Activated T-helper 1 cell treated with anti-CD3 and anti-CD28 coated beads, Interleukin-12 subunit alpha, Interleukin-12 subunit beta, Interleukin-2, Interleukin-4 antibody, amounts not matched to agents 30 ng/mL and 10 ng/mL and 1 ng/mL, durations not matched to agents 14 hours and 24 hours and 36 hours (primary cell): ENCODE measurements at regions of chr1 and their contacts with region 1.

Region 1: DNA sequence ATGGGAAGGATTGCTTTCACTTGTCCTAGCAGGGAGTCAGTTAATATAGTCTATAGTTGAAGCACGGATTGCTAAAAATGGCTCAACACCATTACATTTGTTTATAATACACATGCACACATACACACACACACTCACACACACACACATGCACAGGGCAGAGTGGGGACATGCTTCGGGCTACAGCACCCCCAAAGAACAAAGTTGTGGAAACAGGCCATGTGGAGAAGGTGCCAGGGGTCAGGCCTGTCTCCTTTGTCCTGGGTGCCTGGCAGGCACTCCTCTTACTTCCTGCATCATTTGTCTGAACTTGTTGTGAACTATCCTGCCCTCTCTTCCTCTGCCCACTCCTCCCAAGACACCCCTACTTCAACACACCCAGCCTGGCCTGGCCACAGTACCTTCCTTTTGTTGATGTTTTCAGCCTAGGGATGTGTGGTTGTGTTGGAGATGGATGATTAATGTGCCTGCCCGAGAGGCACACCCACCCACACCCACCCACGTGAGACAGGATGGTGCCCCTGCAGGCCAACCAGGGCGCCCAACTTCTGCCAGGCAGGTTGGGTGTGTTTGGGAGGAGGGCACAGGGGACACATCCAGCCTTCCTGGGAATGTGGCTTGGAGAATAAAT is 17.5 kb downstream of the RASSF5 start:
- DNase-seq: no peak
- H3K4me3 Mint-ChIP-seq: no peak overlapping the region
- H3K27ac Mint-ChIP-seq: peak overlapping the region; percentile 24
- H3K4me1 Mint-ChIP-seq: peaks cover 7% of the 10 kb centered on the region
- H3K27me3 Mint-ChIP-seq: no peaks in the 10 kb centered on the region

Region 2: GRCh38 chr1:206507284-206508129 is 17.3 kb before region 1 on chr1 and contains the start of gene RASSF5:
- intact Hi-C with region 1: loop called (anchors 2 kb)
- DNase-seq: peak; percentile 82
- H3K4me3 Mint-ChIP-seq: peak within 1 kb of the TSS; percentile 78
- H3K27ac Mint-ChIP-seq: peak within 1 kb of the TSS; percentile 47
- H3K4me1 Mint-ChIP-seq: peaks cover 54% of the 10 kb centered on the region
- H3K27me3 Mint-ChIP-seq: peaks cover 17% of the 10 kb centered on the region
- total RNA-seq, gene RASSF5: 220 and 221 TPM in 2 replicates